ENCODE measurements at regions of chr3 and their contacts with region 1.

Region 1: DNA sequence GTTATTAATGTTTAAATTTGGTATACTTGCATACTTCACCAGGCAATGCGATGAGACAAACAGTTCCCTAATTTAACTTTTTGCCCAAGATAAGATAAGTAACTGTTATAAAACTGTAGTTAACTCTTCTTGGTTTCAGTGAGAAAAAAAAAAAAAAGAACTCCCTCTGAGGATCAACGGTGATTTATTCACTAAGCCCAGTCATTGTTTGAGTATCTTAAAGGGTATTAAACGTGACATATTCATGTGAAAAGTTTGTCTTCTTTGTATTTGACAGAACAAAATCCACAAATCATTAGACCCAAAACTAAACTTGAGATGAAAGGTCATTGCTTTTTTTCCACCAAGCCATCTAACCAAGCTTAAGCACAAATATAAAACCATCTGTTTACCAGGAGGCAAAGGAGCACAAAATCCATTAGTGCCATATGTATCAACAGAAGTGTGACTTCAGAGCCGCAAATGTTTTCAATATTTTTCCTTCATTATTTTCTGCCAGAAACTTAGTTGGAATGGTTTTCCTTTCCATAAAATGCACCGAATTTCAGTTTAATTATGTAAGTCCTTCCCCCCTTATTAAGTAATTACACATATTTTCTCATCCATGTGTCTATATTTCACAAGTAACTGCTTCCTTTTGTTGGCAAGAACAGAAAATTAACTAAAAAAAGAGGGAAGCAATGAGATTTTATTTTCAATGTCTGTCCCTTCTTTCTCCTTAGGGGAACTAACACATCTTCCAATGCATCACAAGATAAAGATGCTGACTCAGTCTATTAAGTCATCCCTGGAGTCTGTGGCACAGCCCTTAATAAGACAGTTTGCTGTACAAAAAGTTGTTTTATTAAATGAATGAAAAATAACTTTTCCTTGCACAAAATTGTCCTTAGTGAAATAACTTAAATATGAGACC is 92.2 kb upstream of the RAP2B start:
- H3K4me3 Mint-ChIP-seq: no peak overlapping the region
- H3K27ac Mint-ChIP-seq: peak overlapping the region; percentile 79
- H3K4me1 Mint-ChIP-seq: peaks cover 12% of the 10 kb centered on the region
- H3K27me3 Mint-ChIP-seq: no peaks in the 10 kb centered on the region

Region 2: GRCh38 chr3:153090973-153091372 is 21.1 kb after region 1 on chr3:
- intact Hi-C with region 1: no loop called
- H3K4me3 Mint-ChIP-seq: no peak overlapping the region
- H3K27ac Mint-ChIP-seq: no peak overlapping the region
- H3K4me1 Mint-ChIP-seq: no peaks in the 10 kb centered on the region
- H3K27me3 Mint-ChIP-seq: no peaks in the 10 kb centered on the region

Region 3: GRCh38 chr3:153127788-153128187 is 57.9 kb after region 1 on chr3:
- intact Hi-C with region 1: loop called (anchors 10 kb)
- H3K4me3 Mint-ChIP-seq: no peak overlapping the region
- H3K27ac Mint-ChIP-seq: peak overlapping the region; percentile 11
- H3K4me1 Mint-ChIP-seq: peaks cover 41% of the 10 kb centered on the region
- H3K27me3 Mint-ChIP-seq: no peaks in the 10 kb centered on the region

Region 4: GRCh38 chr3:153273767-153274435 is 204.0 kb after region 1 on chr3:
- intact Hi-C with region 1: no loop called
- H3K4me3 Mint-ChIP-seq: no peak overlapping the region
- H3K27ac Mint-ChIP-seq: peak overlapping the region; percentile 16
- H3K4me1 Mint-ChIP-seq: peaks cover 32% of the 10 kb centered on the region
- H3K27me3 Mint-ChIP-seq: peaks cover 2% of the 10 kb centered on the region